PC-9 (cell line): ENCODE measurements at regions of chr7 and their contacts with region 1.

Region 1: GRCh38 chr7:30504347-30505173 is at the start of gene GGCT:
- DNase-seq: peak; percentile 99
- H3K4me3 ChIP-seq: peak within 1 kb of the TSS; percentile 81
- H3K27ac ChIP-seq: peak within 1 kb of the TSS; percentile 27
- H3K4me1 ChIP-seq: peaks cover 62% of the 10 kb centered on the region
- H3K27me3 ChIP-seq: no peaks in the 10 kb centered on the region
- CTCF ChIP-seq: no peak
- total RNA-seq, gene GGCT: 151 and 162 TPM in 2 replicates

Region 2: GRCh38 chr7:30142710-30143109 is 361.9 kb before region 1 on chr7:
- CTCF ChIA-PET with region 1: no interaction called
- POLR2A ChIA-PET with region 1: no interaction called
- intact Hi-C with region 1: loop called (anchors 10 kb)
- DNase-seq: peak; percentile 84 to 97
- H3K4me3 ChIP-seq: peak overlapping the region; percentile 10; the same call in 1 of the 2 replicates
- H3K27ac ChIP-seq: peak overlapping the region; percentile 72
- H3K4me1 ChIP-seq: peaks cover 33% of the 10 kb centered on the region
- H3K27me3 ChIP-seq: peaks cover 27% of the 10 kb centered on the region; the same call in 1 of the 2 replicates
- CTCF ChIP-seq: no peak

Region 3: GRCh38 chr7:30225863-30226613 is 278.5 kb before region 1 on chr7:
- CTCF ChIA-PET with region 1: no interaction called
- POLR2A ChIA-PET with region 1: no interaction called
- intact Hi-C with region 1: loop called (anchors 5 kb)
- DNase-seq: peak; percentile 84 to 99
- H3K4me3 ChIP-seq: peak overlapping the region; percentile 43
- H3K27ac ChIP-seq: peak overlapping the region; percentile 97
- H3K4me1 ChIP-seq: peaks cover 33% of the 10 kb centered on the region
- H3K27me3 ChIP-seq: no peaks in the 10 kb centered on the region
- CTCF ChIP-seq: no peak

Region 4: GRCh38 chr7:30478349-30479201 is 26.0 kb before region 1 on chr7 and contains the start of gene NOD1:
- CTCF ChIA-PET with region 1: no interaction called
- POLR2A ChIA-PET with region 1: no interaction called
- intact Hi-C with region 1: loop called (anchors 1 kb)
- DNase-seq: peak; percentile 73 to 85
- H3K4me3 ChIP-seq: peak within 1 kb of the TSS; percentile 73
- H3K27ac ChIP-seq: peak within 1 kb of the TSS; percentile 76
- H3K4me1 ChIP-seq: peaks cover 21% of the 10 kb centered on the region
- H3K27me3 ChIP-seq: no peaks in the 10 kb centered on the region
- CTCF ChIP-seq: no peak; the same call in 1 of the 2 replicates
- total RNA-seq, gene NOD1: 16.5 and 20.5 TPM in 2 replicates

Region 5: DNA sequence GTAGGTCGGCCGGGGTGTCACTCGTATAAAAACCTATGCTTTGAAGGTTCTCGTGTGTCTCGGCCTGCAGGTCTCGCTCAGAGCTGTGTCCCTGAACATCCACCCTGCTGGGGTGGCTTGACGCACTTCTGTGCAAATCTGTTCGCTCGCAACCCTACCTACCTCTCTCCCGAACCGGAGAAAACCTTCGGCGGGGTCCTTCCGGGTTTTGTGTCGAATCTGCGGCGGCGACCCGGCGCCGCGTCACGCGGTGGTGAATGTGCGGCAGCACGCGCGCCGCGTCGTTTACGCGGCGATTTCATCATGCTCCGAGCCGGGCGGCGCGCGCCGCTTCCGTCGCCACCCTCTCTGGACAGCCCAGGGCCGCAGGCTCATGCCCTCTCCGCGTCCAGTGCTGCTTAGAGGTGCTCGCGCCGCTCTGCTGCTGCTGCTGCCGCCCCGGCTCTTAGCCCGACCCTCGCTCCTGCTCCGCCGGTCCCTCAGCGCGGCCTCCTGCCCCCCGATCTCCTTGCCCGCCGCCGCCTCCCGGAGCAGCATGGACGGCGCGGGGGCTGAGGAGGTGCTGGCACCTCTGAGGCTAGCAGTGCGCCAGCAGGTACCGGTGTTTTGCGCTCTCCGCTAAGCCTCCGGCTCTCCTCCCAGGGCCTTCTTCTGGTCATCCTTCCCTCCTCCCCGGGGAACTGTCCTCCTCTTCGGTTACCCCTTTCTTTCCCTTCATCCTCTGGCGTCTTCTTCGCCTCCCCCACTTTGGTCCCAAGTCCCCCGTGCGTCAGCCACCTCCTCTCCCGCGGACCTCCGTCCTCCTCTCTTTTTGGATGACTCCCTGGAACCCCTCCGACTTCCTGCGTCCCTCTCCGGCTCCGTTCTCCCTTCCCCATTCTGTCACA is 90.2 kb after region 1 on chr7 and contains the start of gene GARS1:
- CTCF ChIA-PET with region 1: no interaction called
- POLR2A ChIA-PET with region 1: no interaction called
- intact Hi-C with region 1: loop called (anchors 10 kb)
- DNase-seq: peak; percentile 84 to 87
- H3K4me3 ChIP-seq: peak within 1 kb of the TSS; percentile 77
- H3K27ac ChIP-seq: peak within 1 kb of the TSS; percentile 83
- H3K4me1 ChIP-seq: peaks cover 22% of the 10 kb centered on the region
- H3K27me3 ChIP-seq: no peaks in the 10 kb centered on the region
- CTCF ChIP-seq: no peak
- total RNA-seq, gene GARS1: 272 and 274 TPM in 2 replicates

Region 6: GRCh38 chr7:30630986-30631385 is 126.4 kb after region 1 on chr7:
- CTCF ChIA-PET with region 1: no interaction called
- POLR2A ChIA-PET with region 1: no interaction called
- intact Hi-C with region 1: no loop called
- DNase-seq: no peak
- H3K4me3 ChIP-seq: no peak overlapping the region
- H3K27ac ChIP-seq: no peak overlapping the region
- H3K4me1 ChIP-seq: no peaks in the 10 kb centered on the region
- H3K27me3 ChIP-seq: no peaks in the 10 kb centered on the region
- CTCF ChIP-seq: no peak